Ascending aorta (tissue), 2 donors: ENCODE measurements at regions of chr11 and their contacts with region 1.

Region 1: GRCh38 chr11:114075891-114076441 is 16.5 kb downstream of the ZBTB16 start:
- DNase-seq: peak in 1 of 2 donors; percentile 82
- H3K4me3 ChIP-seq: peak overlapping the region; percentile 51 to 60
- H3K27ac ChIP-seq: peak overlapping the region; percentile 89 to 93
- H3K4me1 ChIP-seq: peaks cover 58 to 87% of the 10 kb centered on the region in 2 donors
- H3K27me3 ChIP-seq: no peaks in the 10 kb centered on the region
- CTCF ChIP-seq: peak; percentile 68 to 76 (median 74)

Region 2: GRCh38 chr11:114110952-114111947 is 35.3 kb after region 1 on chr11:
- intact Hi-C with region 1: loop called (anchors 2 kb)
- DNase-seq: peak in 1 of 2 donors; percentile 84
- H3K4me3 ChIP-seq: peak overlapping the region; percentile 23 to 44
- H3K27ac ChIP-seq: peak overlapping the region; percentile 77 to 87
- H3K4me1 ChIP-seq: peaks cover 23 to 77% of the 10 kb centered on the region in 2 donors
- H3K27me3 ChIP-seq: no peaks in the 10 kb centered on the region
- CTCF ChIP-seq: no peak

Region 3: GRCh38 chr11:114148013-114148382 is 72.0 kb after region 1 on chr11:
- intact Hi-C with region 1: loop called (anchors 5 kb)
- DNase-seq: no peak
- H3K4me3 ChIP-seq: no peak overlapping the region
- H3K27ac ChIP-seq: peak overlapping the region; percentile 92 to 99
- H3K4me1 ChIP-seq: peaks cover 54 to 95% of the 10 kb centered on the region in 2 donors
- H3K27me3 ChIP-seq: no peaks in the 10 kb centered on the region
- CTCF ChIP-seq: no peak